Calu3 (cell line): ENCODE measurements at regions of chr12 and their contacts with region 1.

Region 1: DNA sequence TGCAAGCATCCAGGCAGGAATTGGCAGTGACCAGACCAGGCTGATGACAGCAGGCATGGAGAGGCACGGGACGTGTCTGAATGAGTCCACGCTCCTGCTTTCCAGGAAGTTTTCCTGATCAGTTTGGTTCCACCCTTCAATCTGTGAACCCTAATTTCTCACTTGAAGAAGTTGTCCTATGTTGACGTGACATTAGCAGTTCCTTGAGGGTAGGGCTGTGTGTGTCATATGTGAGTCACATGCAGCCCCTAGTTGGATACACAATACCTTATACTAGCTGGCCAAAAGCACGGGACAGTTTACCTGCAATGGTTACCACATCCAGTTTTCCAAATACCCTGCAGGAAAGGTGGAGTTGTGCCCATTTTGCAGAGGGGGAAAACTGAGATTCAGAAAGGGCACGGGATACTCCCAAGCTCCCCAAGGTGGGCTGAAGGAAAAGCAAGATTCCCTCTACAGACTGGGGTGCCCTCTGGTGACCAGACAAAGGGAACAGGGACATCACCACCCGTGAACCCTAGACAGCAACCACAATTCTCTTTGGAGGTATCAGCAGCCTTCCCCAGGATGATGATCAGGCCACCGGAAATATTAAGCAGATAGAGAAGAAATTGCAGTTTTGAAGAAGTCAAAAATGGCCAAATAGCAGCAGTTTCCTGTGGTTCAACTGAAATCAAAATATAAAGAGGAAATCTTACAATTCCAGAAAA is 194.5 kb downstream of the PHETA1 start:
- DNase-seq: no peak
- H3K4me3 Mint-ChIP-seq: no peak overlapping the region
- H3K27ac Mint-ChIP-seq: no peak overlapping the region
- H3K4me1 Mint-ChIP-seq: no peaks in the 10 kb centered on the region
- H3K27me3 Mint-ChIP-seq: peaks cover 100% of the 10 kb centered on the region
- CTCF ChIP-seq: no peak

Region 2: DNA sequence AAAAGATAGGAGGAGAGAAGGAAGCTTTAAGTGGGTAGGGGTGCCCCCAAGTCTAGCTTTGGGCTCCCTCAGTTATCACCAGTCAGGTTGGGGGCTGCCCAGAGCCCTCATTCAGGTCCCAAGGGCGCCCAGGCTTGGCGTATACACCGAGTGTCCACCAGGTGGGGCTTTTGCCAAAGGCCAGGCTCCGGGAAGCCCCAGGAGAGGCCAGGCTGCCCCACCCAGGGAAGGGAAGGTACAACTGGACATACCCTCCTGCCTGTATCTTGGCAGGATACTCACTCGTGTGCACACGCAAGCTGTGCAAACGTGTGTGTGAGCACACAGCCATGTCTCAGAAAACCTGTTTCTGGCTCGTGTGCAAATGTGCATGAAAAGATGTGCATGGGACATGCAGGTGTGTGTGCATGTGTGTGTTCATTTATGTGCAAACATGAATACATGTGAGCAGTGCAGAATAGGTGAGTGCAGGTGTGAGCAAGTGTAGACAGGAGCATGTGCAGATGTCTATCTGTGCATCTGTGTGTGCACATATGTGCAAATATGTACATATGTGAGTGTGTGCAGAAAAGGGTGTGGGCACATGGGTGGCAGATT is 150.1 kb before region 1 on chr12:
- CTCF ChIA-PET with region 1: no interaction called
- intact Hi-C with region 1: loop called (anchors 2 kb)
- DNase-seq: peak; percentile 81
- H3K4me3 Mint-ChIP-seq: no peak overlapping the region
- H3K27ac Mint-ChIP-seq: no peak overlapping the region
- H3K4me1 Mint-ChIP-seq: peaks cover 7% of the 10 kb centered on the region
- H3K27me3 Mint-ChIP-seq: peaks cover 100% of the 10 kb centered on the region
- CTCF ChIP-seq: peak; percentile 88